HepG2 (cell line): ENCODE measurements at regions of chr6 and their contacts with region 1.

Region 1: DNA sequence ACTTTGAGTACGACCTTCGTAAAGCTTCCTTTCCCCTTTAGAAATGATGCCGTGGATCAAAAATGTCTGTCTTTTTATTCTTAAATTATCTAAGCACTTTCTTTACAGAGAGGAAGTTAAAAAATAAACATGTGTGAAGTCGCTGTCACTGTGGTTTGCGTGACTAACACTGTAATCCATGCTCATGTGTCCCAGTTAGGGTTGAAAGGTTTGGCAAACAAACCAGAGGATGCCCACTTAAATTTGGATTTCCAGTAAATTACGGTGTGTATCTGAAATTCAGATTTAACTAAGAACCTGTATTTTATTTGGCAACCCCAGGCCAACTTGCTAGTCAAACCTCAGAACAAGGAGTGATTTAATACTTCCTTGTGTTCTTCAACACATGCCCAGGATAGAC is 21.1 kb downstream of the HLA-DRB1 start:
- DNase-seq: no peak
- ATAC-seq: no peak
- H3K4me3 ChIP-seq: no peak overlapping the region
- H3K27ac ChIP-seq: no peak overlapping the region
- H3K4me1 ChIP-seq: no peaks in the 10 kb centered on the region
- H3K27me3 ChIP-seq: no peaks in the 10 kb centered on the region
- CTCF ChIP-seq: no peak
- EP300 ChIP-seq: no peak
- POLR2A ChIP-seq: no peak
- RAD21 ChIP-seq: no peak

Region 2: DNA sequence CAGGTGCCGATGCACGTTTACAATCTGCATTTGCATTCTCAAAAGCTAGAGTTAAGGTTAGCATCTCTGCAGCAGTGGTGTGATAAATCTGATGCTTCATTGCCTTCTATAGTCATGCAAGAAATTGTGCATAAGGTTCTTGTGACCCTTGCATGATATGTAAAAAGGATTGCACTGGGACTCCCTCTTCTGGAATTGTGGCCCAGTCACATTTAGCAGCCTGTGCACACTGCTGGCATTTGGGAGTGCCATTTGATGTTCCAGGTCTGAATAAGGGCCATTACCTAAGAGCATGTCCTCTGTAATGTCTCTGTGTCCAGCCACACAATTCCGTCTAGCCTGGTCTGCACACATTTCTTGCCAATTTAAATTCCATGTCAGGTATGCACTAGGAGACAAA is 90.8 kb before region 1 on chr6:
- CTCF ChIA-PET with region 1: no interaction called
- POLR2A ChIA-PET with region 1: no interaction called
- in situ Hi-C with region 1: loop called (anchors 5 kb)
- intact Hi-C with region 1: no loop called
- DNase-seq: peak; percentile 13
- ATAC-seq: no peak
- H3K4me3 ChIP-seq: no peak overlapping the region
- H3K27ac ChIP-seq: no peak overlapping the region
- H3K4me1 ChIP-seq: no peaks in the 10 kb centered on the region
- H3K27me3 ChIP-seq: peaks cover 0 to 5% of the 10 kb centered on the region in 2 experiments; a peak in 1 of 5 replicates
- CTCF ChIP-seq: no peak
- EP300 ChIP-seq: no peak
- POLR2A ChIP-seq: no peak
- RAD21 ChIP-seq: no peak

Region 3: GRCh38 chr6:32519118-32519909 is 49.2 kb before region 1 on chr6:
- CTCF ChIA-PET with region 1: no interaction called
- POLR2A ChIA-PET with region 1: no interaction called
- in situ Hi-C with region 1: loop called (anchors 5 kb)
- intact Hi-C with region 1: no loop called
- DNase-seq: peak; percentile 4
- ATAC-seq: no peak
- H3K4me3 ChIP-seq: no peak overlapping the region
- H3K27ac ChIP-seq: no peak overlapping the region
- H3K4me1 ChIP-seq: no peaks in the 10 kb centered on the region
- H3K27me3 ChIP-seq: 0 out of 5 replicates have a peak, but pooled peaks cover 0 to 2% of the 10 kb centered on the region in 2 experiments
- CTCF ChIP-seq: no peak
- EP300 ChIP-seq: no peak
- POLR2A ChIP-seq: no peak
- RAD21 ChIP-seq: no peak

Region 4: DNA sequence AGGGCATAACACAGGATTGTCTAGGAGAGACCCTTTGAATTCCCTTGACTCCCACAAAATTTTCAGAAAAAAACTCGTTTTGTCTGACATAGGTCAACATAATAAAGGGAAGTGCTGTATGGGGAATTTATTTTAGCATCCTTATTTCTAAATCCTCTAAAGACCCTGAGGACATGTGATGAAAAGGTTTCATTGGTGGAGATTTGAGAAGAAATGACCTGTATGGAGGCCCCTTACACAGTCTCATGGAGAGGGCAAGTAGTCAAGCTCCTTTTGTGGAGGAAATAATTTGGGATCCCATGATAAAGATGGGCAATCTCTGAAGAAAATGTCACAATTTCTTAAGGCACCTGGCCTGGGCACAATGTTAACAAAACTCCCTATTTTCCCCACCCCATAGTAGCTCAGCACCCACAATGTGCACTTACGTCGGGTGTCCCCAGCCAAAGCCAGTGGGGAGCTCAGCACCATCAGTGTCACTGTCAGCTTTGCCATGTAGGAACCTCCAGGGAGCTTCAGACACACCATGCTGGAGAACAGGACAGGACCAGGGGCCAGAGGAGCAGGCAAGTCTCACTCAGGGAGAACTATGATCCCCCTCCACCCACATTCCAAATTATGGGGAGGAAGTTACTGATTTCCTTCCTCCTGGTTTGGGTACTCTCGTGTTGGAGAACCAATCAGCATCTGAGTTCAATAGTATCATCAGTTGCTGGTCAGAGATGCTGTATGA is 38.7 kb before region 1 on chr6 and contains the start of gene HLA-DRB5:
- CTCF ChIA-PET with region 1: no interaction called
- POLR2A ChIA-PET with region 1: no interaction called
- in situ Hi-C with region 1: no loop called
- intact Hi-C with region 1: loop called (anchors 2 kb)
- DNase-seq: no peak
- ATAC-seq: no peak; the same call in 2 of the 3 replicates
- H3K4me3 ChIP-seq: no peak within 1 kb of the TSS
- H3K27ac ChIP-seq: no peak within 1 kb of the TSS
- H3K4me1 ChIP-seq: no peaks in the 10 kb centered on the region
- H3K27me3 ChIP-seq: no peaks in the 10 kb centered on the region
- CTCF ChIP-seq: no peak
- EP300 ChIP-seq: no peak
- POLR2A ChIP-seq: no peak
- RAD21 ChIP-seq: no peak
- total RNA-seq, gene HLA-DRB5: not detected in 2 replicates

Region 5: DNA sequence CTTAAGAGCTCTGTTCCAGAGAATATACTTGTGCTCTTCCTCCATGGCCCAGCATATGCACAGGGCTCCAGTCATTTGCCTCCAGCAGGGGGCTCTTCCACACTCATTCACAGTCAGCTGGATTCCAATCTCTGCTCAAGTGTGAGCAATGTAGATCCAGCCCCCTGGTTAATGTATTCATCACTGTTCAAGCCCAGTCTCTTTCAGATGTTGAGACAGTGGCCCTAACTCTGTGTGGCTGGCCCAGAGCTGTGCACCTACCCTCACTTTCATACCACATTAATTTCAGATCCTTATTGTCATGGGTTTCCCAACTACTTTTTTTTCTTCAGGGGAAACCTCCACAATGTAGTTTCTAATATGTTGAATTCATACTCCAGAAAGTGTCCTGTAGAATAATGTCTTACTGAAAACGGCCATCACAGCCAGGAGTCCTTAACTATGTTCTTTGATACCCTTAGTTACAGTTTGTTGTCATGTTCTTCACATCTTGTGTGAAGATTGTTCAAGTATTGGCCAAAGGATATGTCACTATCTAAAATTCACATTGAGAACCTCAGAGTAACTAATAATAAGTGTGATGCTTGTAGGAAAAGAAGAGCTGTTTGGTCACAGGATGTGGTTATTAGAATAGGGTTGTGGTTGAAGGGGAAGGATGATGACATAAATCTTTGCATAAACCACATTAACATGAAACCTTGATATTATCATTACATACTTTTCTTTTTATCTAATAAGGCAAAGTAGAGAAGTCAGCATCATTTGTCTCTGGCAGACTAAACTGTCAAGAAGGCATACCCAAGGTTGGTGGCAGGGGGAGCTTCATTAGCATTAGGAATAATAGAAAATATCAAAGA is 54.2 kb after region 1 on chr6:
- CTCF ChIA-PET with region 1: no interaction called
- POLR2A ChIA-PET with region 1: no interaction called
- in situ Hi-C with region 1: no loop called
- intact Hi-C with region 1: no loop called
- DNase-seq: peak; percentile 28
- ATAC-seq: peak; percentile 81
- H3K4me3 ChIP-seq: no peak overlapping the region
- H3K27ac ChIP-seq: no peak overlapping the region
- H3K4me1 ChIP-seq: no peaks in the 10 kb centered on the region
- H3K27me3 ChIP-seq: peaks cover 0 to 3% of the 10 kb centered on the region in 2 experiments; a peak in 2 of 5 replicates
- CTCF ChIP-seq: peak; percentile 58
- EP300 ChIP-seq: no peak
- POLR2A ChIP-seq: no peak
- RAD21 ChIP-seq: no peak